Activated CD8-positive, alpha-beta T cell treated with anti-CD3 and anti-CD28 coated beads for 36 hours (primary cell): ENCODE measurements at regions of chr3 and their contacts with region 1.

Region 1: DNA sequence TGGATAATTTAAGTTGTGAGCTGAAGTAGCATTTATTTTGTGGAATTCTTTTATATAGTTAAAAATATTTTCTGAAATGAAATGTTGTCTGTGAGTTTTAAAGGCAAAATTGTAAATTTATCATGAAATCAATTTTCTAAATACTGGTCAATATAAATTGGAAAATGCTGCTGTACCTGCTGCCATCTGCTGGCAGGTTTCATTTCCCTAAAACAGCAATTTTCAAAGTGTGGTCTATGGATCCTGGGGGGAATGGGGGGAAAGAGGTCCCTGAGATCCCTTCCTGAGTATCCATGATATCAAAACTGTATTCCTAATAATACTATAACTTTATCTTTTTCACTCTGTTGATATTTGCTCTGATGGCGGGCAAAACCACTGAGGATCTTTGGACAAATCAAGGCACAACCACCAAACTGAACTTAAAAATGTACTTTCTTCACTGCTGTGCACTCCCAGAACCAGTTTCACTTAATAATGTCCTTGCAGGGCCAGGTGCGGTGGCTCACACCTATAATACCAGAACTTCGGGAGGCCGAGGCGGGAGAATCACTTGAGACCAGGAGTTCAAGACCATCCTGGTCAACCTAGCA is 17.2 kb upstream of the CCR4 start:
- DNase-seq: peak; percentile 54
- ATAC-seq: no peak
- H3K4me3 Mint-ChIP-seq: no peak overlapping the region
- H3K27ac Mint-ChIP-seq: no peak overlapping the region
- H3K4me1 Mint-ChIP-seq: no peaks in the 10 kb centered on the region
- H3K27me3 Mint-ChIP-seq: peaks cover 7% of the 10 kb centered on the region
- CTCF ChIP-seq: peak; percentile 74

Region 2: GRCh38 chr3:32733631-32734229 is 200.5 kb before region 1 on chr3:
- CTCF ChIA-PET with region 1: interaction called, 4 read pairs
- POLR2A ChIA-PET with region 1: no interaction called
- intact Hi-C with region 1: loop called (anchors 2 kb)
- DNase-seq: no peak
- ATAC-seq: peak; percentile 55
- H3K4me3 Mint-ChIP-seq: no peak overlapping the region
- H3K27ac Mint-ChIP-seq: no peak overlapping the region
- H3K4me1 Mint-ChIP-seq: no peaks in the 10 kb centered on the region
- H3K27me3 Mint-ChIP-seq: no peaks in the 10 kb centered on the region
- CTCF ChIP-seq: peak; percentile 56

Region 3: DNA sequence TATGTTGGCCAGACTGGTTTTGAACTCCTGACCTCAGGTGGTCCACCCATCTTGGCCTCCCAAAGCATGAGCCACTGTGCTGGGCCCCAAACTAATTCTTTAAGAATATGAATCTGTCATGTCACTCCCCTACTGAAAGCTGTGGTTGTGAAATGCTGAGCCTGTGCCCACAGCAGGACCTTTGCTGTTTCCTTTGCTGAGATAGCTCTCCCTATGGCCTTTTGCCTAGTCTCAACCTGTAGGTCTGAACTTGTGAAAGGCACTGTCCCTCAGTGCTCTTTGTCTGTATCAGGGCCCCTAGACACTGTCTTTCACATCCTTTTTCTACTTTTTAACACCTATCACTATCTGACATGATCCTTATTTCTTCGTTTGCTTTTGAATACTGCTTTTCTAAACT is 45.5 kb before region 1 on chr3:
- CTCF ChIA-PET with region 1: no interaction called
- POLR2A ChIA-PET with region 1: no interaction called
- intact Hi-C with region 1: no loop called
- DNase-seq: no peak
- ATAC-seq: no peak
- H3K4me3 Mint-ChIP-seq: no peak overlapping the region
- H3K27ac Mint-ChIP-seq: no peak overlapping the region
- H3K4me1 Mint-ChIP-seq: no peaks in the 10 kb centered on the region
- H3K27me3 Mint-ChIP-seq: peaks cover 7% of the 10 kb centered on the region
- CTCF ChIP-seq: no peak